MCF 10A (cell line): ENCODE measurements at regions of chr1 and their contacts with region 1.

Region 1: GRCh38 chr1:1399187-1399871 is at the start of gene CCNL2:
- DNase-seq: peak; percentile 97
- H3K4me3 Mint-ChIP-seq: peak within 1 kb of the TSS; percentile 88
- H3K27ac Mint-ChIP-seq: peak within 1 kb of the TSS; percentile 85
- H3K4me1 Mint-ChIP-seq: peaks cover 18% of the 10 kb centered on the region
- H3K27me3 Mint-ChIP-seq: no peaks in the 10 kb centered on the region
- CTCF ChIP-seq: peak; percentile 46
- total RNA-seq, gene CCNL2: 230 and 248 TPM in 2 replicates

Region 2: GRCh38 chr1:1053022-1053421 is 346.3 kb before region 1 on chr1:
- CTCF ChIA-PET with region 1: no interaction called
- POLR2A ChIA-PET with region 1: no interaction called
- intact Hi-C with region 1: no loop called
- DNase-seq: no peak
- H3K4me3 Mint-ChIP-seq: no peak overlapping the region
- H3K27ac Mint-ChIP-seq: no peak overlapping the region
- H3K4me1 Mint-ChIP-seq: peaks cover under 1% of the 10 kb centered on the region
- H3K27me3 Mint-ChIP-seq: no peaks in the 10 kb centered on the region
- CTCF ChIP-seq: no peak

Region 3: DNA sequence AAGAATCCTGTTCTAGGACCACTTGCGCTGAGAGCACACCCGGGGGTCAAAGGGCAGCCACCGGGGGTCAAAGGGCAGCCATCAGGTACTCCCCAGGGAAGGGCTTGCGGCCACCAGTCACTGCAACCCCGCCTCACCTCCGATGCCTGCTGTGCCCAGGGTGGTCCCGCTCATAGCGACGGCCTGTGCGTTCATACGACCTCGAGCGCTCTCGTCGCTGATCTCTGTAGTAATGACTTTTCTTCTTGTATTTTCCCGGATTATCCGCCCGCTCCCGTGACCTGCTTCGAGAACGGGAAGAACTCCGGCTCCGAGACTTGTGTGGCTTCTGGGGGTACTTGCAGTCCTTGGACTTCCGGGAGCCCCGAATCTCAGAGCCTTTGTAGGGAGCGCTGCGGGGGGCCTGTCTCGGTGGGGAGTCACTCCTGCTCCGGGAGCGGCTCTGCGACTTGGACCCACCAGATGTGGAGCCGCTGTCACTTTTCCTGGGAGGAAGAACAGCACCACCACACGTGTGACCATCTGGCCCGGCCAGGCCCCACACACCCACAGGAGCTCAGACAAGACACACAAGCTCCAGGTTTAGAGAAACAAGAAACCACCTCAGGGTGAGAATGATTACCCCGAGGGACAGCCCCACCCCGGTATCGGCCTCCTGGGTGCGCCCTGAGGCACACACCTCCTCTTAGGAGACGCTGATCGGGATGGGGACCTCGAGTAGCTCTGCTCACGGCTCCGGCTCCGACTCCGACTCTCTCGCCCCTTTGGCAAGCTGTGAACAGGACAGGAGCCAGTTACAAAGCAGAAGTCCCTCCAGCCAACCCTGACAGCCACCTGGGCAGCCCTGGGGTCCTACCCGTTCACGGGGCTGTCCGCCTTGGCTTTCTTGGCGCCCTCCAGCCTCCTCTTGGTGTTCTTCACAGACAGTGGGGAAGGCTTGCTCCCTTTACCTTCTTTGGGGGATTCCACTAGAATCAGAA is 11.9 kb before region 1 on chr1:
- CTCF ChIA-PET with region 1: interaction called, 5 read pairs
- POLR2A ChIA-PET with region 1: interaction called, 12 read pairs
- intact Hi-C with region 1: no loop called
- DNase-seq: no peak
- H3K4me3 Mint-ChIP-seq: no peak overlapping the region
- H3K27ac Mint-ChIP-seq: no peak overlapping the region
- H3K4me1 Mint-ChIP-seq: no peaks in the 10 kb centered on the region
- H3K27me3 Mint-ChIP-seq: no peaks in the 10 kb centered on the region
- CTCF ChIP-seq: no peak

Region 4: GRCh38 chr1:1517973-1518620 is 118.8 kb after region 1 on chr1:
- CTCF ChIA-PET with region 1: no interaction called
- POLR2A ChIA-PET with region 1: no interaction called
- intact Hi-C with region 1: no loop called
- DNase-seq: no peak
- H3K4me3 Mint-ChIP-seq: no peak overlapping the region
- H3K27ac Mint-ChIP-seq: no peak overlapping the region
- H3K4me1 Mint-ChIP-seq: no peaks in the 10 kb centered on the region
- H3K27me3 Mint-ChIP-seq: no peaks in the 10 kb centered on the region
- CTCF ChIP-seq: no peak

Region 5: GRCh38 chr1:1574721-1575537 is 175.6 kb after region 1 on chr1 and contains the start of gene SSU72:
- CTCF ChIA-PET with region 1: no interaction called
- POLR2A ChIA-PET with region 1: no interaction called
- intact Hi-C with region 1: no loop called
- DNase-seq: peak; percentile 93
- H3K4me3 Mint-ChIP-seq: peak within 1 kb of the TSS; percentile 75
- H3K27ac Mint-ChIP-seq: peak within 1 kb of the TSS; percentile 99
- H3K4me1 Mint-ChIP-seq: peaks cover 2% of the 10 kb centered on the region
- H3K27me3 Mint-ChIP-seq: no peaks in the 10 kb centered on the region
- CTCF ChIP-seq: no peak
- total RNA-seq, gene SSU72: 97.4 and 104 TPM in 2 replicates